ENCODE measurements at regions of chr14 and their contacts with region 1.

Region 1: DNA sequence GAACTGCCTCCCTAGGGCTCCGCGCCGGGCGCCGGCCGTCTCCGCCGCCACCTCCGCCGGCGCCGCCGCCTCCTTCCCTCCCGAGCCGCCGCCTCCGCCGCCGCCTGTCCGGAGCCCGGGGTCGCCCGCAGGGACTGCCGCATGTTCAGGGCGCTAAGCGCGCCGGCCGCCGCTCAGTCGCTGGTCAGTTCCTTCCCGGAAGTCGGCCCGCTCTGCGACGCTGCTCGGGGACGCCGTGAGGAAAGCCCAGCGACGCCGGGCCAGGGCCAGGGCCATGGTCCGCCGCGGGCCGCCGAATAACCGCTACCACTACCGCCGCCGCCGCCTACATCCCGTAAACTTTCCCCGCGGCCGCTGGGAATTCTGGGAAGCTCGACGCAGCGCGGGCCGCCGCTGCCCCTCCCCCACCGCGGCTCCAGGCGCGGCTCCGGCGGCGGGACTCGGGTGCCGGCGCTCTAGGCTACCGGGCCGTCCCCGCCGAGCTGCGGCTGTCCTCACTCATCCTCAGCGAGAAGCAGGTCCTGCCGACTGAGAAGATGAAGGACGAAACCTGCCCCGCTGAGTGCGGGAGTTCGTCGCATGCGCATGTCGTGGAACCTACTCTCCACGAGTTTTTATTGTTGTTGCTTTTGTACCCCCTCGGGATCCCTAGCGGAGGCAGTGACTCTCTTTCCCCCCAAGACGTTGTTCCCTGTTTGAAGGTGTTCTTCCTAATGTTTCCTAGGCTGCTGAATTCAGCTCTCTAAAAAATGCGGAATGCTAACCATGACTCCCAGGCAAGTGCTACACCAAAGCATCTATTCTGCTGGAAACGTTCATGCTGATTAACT is at the start of gene SAV1:
- DNase-seq: peak; percentile 82
- H3K4me3 ChIP-seq: peak within 1 kb of the TSS; percentile 70 to 85 (median 81)
- H3K27ac ChIP-seq: peak within 1 kb of the TSS; percentile 81
- H3K4me1 ChIP-seq: peaks cover 23% of the 10 kb centered on the region
- H3K27me3 ChIP-seq: no peaks in the 10 kb centered on the region
- CTCF ChIP-seq: no peak
- POLR2A ChIP-seq: peak; percentile 99
- total RNA-seq, gene SAV1: 27.8 and 31.0 TPM in 2 replicates

Region 2: DNA sequence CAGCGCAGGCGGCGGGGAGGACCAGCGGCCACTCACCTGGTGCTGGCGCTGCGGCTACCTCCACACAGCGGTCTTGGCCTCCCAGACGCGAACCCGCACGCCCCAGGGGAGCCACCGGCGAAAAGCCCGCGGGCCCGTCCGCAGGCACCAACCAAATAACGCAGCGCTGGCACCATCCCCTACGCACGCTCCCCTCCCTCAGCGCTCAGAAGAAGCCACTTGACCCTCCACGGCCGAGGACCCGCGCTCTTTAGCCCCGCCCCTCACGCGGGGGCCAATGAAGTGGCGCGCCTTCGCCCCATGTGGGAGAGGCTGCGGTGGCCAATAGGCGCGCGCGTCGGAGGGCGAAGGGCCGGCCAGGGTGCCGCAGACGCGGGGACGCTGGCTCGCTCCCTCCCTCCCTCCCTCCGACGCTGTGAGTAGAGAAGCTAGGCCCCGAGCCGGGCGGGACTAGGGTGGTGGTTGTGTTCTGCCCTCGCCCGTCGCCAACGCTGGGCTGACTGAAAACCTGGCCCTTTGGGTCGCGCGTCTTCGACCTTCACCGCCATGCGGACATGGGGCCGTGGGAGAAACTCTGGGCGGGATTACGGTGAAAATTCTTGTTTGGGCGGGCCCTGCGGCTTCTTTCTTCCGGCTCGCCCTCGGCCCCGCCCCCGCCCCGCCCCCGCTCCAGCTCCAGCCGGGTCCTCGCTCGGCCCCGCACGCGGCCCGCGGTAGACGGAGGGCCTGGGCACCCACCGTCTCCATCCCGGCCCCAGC is 356.1 kb before region 1 on chr14 and contains the starts of genes DMAC2L and L2HGDH:
- CTCF ChIA-PET with region 1: no interaction called
- POLR2A ChIA-PET with region 1: interaction called, 3 read pairs
- dilution Hi-C with region 1: no loop called
- intact Hi-C with region 1: loop called (anchors 5 kb)
- DNase-seq: peak; percentile 95
- H3K4me3 ChIP-seq: peak within 1 kb of the TSS; percentile 64 to 83 (median 79)
- H3K27ac ChIP-seq: peak within 1 kb of the TSS; percentile 66
- H3K4me1 ChIP-seq: peaks cover 15% of the 10 kb centered on the region
- H3K27me3 ChIP-seq: no peaks in the 10 kb centered on the region
- CTCF ChIP-seq: peak in 1 of 2 donors; percentile 60
- POLR2A ChIP-seq: peak; percentile 91
- total RNA-seq, gene DMAC2L: 7.9 and 13.9 TPM in 2 replicates
- total RNA-seq, gene L2HGDH: 5.3 and 5.4 TPM in 2 replicates

Region 3: DNA sequence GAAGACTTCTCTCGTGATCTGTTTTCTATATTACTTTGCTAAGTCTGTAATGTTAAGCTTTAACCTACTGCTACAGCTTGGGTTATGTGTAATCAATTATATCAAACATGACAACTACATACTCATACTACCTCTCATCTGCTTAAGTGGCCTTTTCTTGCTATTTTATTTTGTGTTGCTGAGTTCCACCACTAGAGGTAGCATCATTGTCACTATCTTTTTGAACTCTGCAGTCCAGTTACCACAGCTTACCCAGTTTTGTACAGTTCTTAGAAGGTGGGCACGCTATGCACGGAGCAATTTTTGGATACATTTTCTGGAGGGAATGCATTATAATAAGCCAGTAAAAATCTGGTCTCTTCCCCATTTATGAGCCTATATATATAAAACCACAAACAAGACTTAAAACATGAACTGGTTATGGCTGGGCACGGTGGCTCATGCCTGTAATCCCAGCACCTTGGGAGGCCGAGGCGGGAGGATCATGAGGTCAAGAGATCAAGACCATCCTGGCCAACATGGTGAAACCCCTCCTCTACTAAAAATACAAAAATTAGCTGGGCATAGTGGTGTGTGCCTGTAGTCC is 48.6 kb before region 1 on chr14:
- CTCF ChIA-PET with region 1: interaction called, 5 read pairs
- POLR2A ChIA-PET with region 1: no interaction called
- dilution Hi-C with region 1: no loop called
- intact Hi-C with region 1: loop called (anchors 5 kb)
- DNase-seq: peak; percentile 70
- H3K4me3 ChIP-seq: no peak overlapping the region
- H3K27ac ChIP-seq: no peak overlapping the region
- H3K4me1 ChIP-seq: peaks cover 5% of the 10 kb centered on the region
- H3K27me3 ChIP-seq: no peaks in the 10 kb centered on the region
- CTCF ChIP-seq: peak; percentile 37 to 42
- POLR2A ChIP-seq: no peak

Region 4: DNA sequence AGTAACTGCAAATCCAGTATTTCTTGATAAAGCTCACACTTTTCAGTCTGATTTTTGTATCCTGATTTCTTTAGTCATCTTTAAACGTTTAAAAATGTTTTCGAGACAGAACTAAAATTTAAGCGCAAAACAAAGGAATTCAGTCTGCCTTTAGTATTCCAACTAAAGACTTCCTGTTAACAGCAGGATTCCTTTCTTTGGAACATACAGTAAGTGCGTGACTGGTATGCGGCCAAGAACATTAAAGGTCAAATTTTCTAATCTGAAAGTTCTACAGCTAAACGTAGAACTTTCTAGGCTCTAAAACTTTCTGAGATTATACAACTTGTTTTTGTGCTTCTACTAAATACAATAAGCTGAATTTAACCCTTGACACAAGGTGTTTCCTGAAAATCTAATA is 10.0 kb before region 1 on chr14:
- CTCF ChIA-PET with region 1: interaction called, 11 read pairs
- POLR2A ChIA-PET with region 1: interaction called, 9 read pairs
- dilution Hi-C with region 1: no loop called
- intact Hi-C with region 1: loop called (anchors 1 kb)
- DNase-seq: peak; percentile 86
- H3K4me3 ChIP-seq: peak overlapping the region in 1 of 3 experiments; percentile 38
- H3K27ac ChIP-seq: peak overlapping the region; percentile 79
- H3K4me1 ChIP-seq: peaks cover 26% of the 10 kb centered on the region
- H3K27me3 ChIP-seq: no peaks in the 10 kb centered on the region
- CTCF ChIP-seq: no peak
- POLR2A ChIP-seq: no peak

Region 5: GRCh38 chr14:50688875-50689274 is 20.7 kb after region 1 on chr14:
- CTCF ChIA-PET with region 1: interaction called, 4 read pairs
- POLR2A ChIA-PET with region 1: interaction called, 10 read pairs
- dilution Hi-C with region 1: no loop called
- intact Hi-C with region 1: no loop called
- DNase-seq: no peak
- H3K4me3 ChIP-seq: no peak overlapping the region
- H3K27ac ChIP-seq: no peak overlapping the region
- H3K4me1 ChIP-seq: no peaks in the 10 kb centered on the region
- H3K27me3 ChIP-seq: no peaks in the 10 kb centered on the region
- CTCF ChIP-seq: no peak
- POLR2A ChIP-seq: no peak

Measured in endothelial cell of umbilical vein (primary cell).